ENCODE measurements at regions of chr6 and their contacts with region 1.

Region 1: GRCh38 chr6:132218059-132218696 is 183.1 kb downstream of the MOXD1 start:
- DNase-seq: no peak
- H3K4me3 ChIP-seq: no peak overlapping the region
- H3K27ac ChIP-seq: no peak overlapping the region
- H3K4me1 ChIP-seq: peaks cover 0 to 8% (median 0%) of the 10 kb centered on the region in 4 donors
- H3K27me3 ChIP-seq: no peaks in the 10 kb centered on the region
- CTCF ChIP-seq: peak in 2 of 4 experiments; percentile 15 to 52
- EP300 ChIP-seq: no peak
- POLR2A ChIP-seq: no peak

Region 2: DNA sequence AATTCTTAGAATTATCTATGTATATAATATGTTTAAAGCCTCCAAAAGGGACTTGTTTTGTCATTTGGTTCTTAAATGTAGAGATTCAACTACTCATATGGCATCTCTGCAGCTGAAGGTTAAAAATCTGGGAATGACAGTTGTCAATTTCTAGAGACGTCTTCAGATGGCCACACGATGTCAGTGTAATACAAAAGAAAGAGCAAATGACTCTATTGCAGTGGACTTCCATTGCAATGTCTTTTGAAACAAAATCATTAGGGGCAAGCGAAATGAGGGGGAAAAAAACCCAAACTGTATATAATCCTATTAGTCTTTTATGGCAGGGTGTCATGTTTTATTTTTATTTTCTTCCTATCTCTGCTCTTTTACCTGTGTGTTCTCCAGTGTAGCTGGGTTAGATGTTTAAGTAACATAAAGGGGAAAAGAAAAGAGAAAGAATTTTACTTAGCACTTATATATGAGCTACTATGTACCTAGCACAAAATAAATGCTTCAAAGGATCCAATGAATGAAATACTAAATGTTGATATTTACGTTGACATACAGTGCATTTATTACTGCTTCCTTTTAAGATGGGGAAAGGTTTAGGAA is 293.2 kb before region 1 on chr6:
- intact Hi-C with region 1: loop called (anchors 5 kb)
- DNase-seq: no peak
- H3K4me3 ChIP-seq: no peak overlapping the region
- H3K27ac ChIP-seq: no peak overlapping the region
- H3K4me1 ChIP-seq: no peaks in the 10 kb centered on the region
- H3K27me3 ChIP-seq: no peaks in the 10 kb centered on the region
- CTCF ChIP-seq: peak in 2 of 4 experiments; percentile 30 to 53
- EP300 ChIP-seq: no peak
- POLR2A ChIP-seq: no peak

Region 3: DNA sequence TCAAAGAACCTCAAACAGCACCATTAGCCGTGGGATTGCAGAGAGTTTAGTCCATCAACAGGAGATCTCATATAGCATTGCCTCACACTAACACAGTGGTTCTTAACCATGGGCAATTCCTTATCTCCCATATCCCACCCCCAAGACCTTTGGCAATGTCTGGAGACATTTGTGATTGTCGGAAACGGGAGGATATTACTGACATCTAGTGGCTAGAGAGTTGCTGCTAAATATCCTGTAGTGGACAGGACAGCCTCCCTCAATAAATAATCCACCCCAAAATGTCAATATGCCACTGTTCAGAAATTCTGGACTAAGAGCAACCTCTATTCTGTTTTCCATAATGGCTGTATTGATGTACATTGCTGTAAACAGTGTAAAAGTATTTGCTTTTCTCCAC is 56.9 kb before region 1 on chr6:
- intact Hi-C with region 1: loop called (anchors 5 kb)
- DNase-seq: no peak
- H3K4me3 ChIP-seq: no peak overlapping the region
- H3K27ac ChIP-seq: no peak overlapping the region
- H3K4me1 ChIP-seq: peaks cover 0 to 4% (median 0%) of the 10 kb centered on the region in 4 donors
- H3K27me3 ChIP-seq: no peaks in the 10 kb centered on the region
- CTCF ChIP-seq: peak in 3 of 4 experiments; percentile 30 to 52 (median 35)
- EP300 ChIP-seq: no peak
- POLR2A ChIP-seq: no peak

Measured in sigmoid colon (tissue), 7 donors.